ENCODE measurements at regions of chr5 and their contacts with region 1.

Region 1: GRCh38 chr5:60944904-60945812 is at the starts of genes ERCC8 and NDUFAF2:
- DNase-seq: peak; percentile 93
- H3K4me3 Mint-ChIP-seq: no peak within 1 kb of the TSS
- H3K27ac Mint-ChIP-seq: no peak within 1 kb of the TSS
- H3K4me1 Mint-ChIP-seq: peaks cover 17% of the 10 kb centered on the region
- H3K27me3 Mint-ChIP-seq: no peaks in the 10 kb centered on the region
- total RNA-seq, gene ERCC8: 9.9 to 10.0 TPM
- total RNA-seq, gene NDUFAF2: 18.9 to 22.3 TPM

Region 2: DNA sequence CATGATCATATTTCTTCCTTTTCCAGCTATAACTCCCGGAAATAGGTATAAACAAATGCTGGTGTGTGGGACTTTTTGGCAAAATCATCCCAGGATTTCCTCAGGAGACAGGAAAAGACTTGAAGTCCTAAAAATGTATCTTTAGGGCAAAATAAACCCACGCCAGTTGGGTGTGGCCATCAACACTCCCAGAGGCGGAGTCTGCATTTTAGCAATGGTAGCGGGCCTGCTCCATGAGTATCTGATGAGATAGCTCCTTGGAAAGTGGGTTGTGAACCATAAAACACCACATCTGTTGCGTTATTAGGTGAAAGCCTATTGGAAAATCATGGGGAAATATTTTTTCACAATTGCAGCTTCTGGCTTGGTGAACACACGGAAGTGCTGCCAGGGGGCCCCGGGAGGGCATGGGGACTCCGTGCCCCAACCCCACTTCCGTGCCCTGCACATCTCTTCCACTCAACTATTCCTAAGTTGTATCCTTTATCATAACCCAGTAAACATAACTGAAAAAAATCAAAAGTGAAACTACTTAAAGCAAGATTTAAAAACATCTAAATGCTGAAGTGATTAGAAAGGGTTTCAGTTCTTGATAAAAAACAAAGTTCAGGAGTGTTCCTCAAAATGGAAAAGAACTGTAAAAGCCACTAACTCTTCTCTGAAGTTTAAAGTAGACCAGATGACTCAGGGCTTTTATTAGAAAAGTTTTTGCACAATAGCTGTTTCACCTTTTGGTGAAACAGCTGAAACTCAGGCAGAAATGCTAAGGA is 1744.6 kb after region 1 on chr5:
- CTCF ChIA-PET with region 1: no interaction called
- POLR2A ChIA-PET with region 1: interaction called, 11 read pairs
- DNase-seq: no peak
- H3K4me3 Mint-ChIP-seq: peak overlapping the region; percentile 13
- H3K27ac Mint-ChIP-seq: peak overlapping the region; percentile 64
- H3K4me1 Mint-ChIP-seq: peaks cover 11% of the 10 kb centered on the region
- H3K27me3 Mint-ChIP-seq: no peaks in the 10 kb centered on the region